OCI-LY7 (cell line): ENCODE measurements at regions of chr13 and their contacts with region 1.

Region 1: DNA sequence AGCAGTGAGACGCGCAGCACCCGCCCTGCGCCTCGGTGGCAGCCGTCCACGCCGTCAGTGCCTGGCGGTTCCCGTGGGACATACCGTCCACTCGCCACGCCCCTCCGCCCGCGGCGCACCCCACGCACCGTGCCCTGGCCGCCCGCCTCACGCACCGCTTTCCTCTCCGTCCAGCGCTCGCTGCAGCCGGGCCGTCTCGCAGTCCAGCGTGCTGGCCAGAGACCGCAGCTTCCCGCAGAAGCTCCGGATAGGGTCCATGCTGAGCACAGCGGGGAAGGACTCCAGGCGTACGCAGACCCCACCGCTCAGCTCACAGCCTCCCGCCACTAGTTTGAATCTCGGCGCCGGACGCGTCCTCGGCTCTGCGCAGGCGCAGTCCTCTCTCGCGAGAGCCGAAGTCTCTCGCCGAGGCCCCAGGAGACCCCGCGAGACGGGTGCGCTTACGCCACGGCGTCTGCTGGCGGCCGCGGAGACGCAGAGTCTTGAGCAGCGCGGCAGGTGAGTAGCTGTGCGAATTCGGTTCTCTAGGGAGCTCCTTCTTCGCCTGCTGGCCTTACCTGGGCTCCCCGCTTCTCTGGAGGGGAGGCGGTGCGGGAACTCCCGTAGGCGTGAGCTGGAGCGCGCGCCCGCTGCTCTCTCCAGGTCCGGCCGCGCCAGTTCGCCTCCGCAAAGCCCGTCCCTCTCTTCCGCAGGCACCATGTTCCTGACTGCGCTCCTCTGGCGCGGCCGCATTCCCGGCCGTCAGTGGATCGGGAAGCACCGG is at the starts of genes MRPL57 and SKA3:
- DNase-seq: peak; percentile 97
- H3K4me3 ChIP-seq: peak within 1 kb of the TSS; percentile 86
- H3K27ac ChIP-seq: peak within 1 kb of the TSS; percentile 75
- H3K4me1 ChIP-seq: peaks cover 30% of the 10 kb centered on the region
- CTCF ChIP-seq: no peak
- total RNA-seq, gene MRPL57: 38.9 and 52.9 TPM in 2 replicates
- total RNA-seq, gene SKA3: 28.5 and 34.4 TPM in 2 replicates

Region 2: GRCh38 chr13:20953245-20953931 is 223.0 kb before region 1 on chr13:
- CTCF ChIA-PET with region 1: no interaction called
- POLR2A ChIA-PET with region 1: no interaction called
- intact Hi-C with region 1: no loop called
- DNase-seq: no peak
- H3K4me3 ChIP-seq: no peak overlapping the region
- H3K27ac ChIP-seq: no peak overlapping the region
- H3K4me1 ChIP-seq: no peaks in the 10 kb centered on the region
- CTCF ChIP-seq: no peak

Region 3: DNA sequence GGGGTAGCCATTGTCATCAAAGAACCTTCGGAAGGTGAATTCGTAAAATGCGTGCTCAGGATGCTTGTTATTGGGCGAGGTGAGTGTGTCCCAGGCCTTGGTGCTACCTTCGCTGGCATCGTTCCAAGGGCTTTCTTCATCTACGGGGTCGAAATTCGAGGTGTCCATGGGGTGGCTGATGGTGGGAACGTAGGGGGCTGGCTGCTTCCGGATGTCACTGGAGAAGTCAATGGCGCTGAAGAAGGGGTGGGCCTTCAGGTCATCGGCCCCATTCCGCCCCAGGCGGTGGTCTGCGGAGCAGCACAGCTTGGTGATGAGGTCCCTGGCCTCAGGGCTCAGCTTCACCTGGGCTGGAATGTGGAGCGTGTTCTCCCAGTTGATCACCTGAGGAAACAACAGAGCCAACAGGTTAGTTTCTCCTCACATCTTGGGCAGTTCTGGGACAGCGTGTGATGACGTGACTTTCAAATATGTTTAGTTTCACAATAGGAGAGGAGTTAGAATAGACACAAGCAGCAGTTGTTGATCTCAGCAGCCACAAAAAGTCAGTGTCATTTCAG is 201.3 kb before region 1 on chr13:
- CTCF ChIA-PET with region 1: no interaction called
- POLR2A ChIA-PET with region 1: no interaction called
- intact Hi-C with region 1: no loop called
- DNase-seq: no peak
- H3K4me3 ChIP-seq: no peak overlapping the region
- H3K27ac ChIP-seq: no peak overlapping the region
- H3K4me1 ChIP-seq: no peaks in the 10 kb centered on the region
- CTCF ChIP-seq: no peak

Region 4: DNA sequence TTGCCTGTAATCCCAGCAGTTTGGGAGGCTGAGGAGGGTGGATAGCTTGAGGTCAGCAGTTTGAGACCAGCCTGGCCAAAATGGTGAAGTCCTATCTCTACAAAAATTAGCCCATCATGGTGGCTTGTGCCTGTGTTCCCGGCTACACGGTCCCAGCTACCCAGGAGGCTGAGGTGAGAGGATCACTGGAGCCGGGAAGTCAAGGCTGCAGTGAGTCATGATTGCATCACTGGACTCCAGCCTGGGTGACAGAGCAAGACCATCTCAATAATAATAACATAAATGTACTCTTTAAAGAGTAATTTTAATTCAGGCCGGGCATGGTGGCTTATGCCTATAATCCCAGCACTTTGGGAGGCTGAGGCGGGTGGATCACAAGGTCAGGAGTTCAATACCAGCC is 38.7 kb before region 1 on chr13:
- CTCF ChIA-PET with region 1: no interaction called
- POLR2A ChIA-PET with region 1: interaction called, 13 read pairs
- intact Hi-C with region 1: no loop called
- DNase-seq: no peak
- H3K4me3 ChIP-seq: no peak overlapping the region
- H3K27ac ChIP-seq: no peak overlapping the region
- H3K4me1 ChIP-seq: peaks cover 11% of the 10 kb centered on the region
- CTCF ChIP-seq: no peak

Region 5: GRCh38 chr13:21164631-21165030 is 11.8 kb before region 1 on chr13:
- CTCF ChIA-PET with region 1: no interaction called
- POLR2A ChIA-PET with region 1: interaction called, 26 read pairs
- intact Hi-C with region 1: no loop called
- DNase-seq: no peak
- H3K4me3 ChIP-seq: no peak overlapping the region
- H3K27ac ChIP-seq: no peak overlapping the region
- H3K4me1 ChIP-seq: no peaks in the 10 kb centered on the region
- CTCF ChIP-seq: no peak

Region 6: GRCh38 chr13:21476893-21477472 is 300.6 kb after region 1 on chr13:
- CTCF ChIA-PET with region 1: no interaction called
- POLR2A ChIA-PET with region 1: interaction called, 3 read pairs
- intact Hi-C with region 1: loop called (anchors 2 kb)
- DNase-seq: peak; percentile 81
- H3K4me3 ChIP-seq: peak overlapping the region; percentile 55
- H3K27ac ChIP-seq: no peak overlapping the region
- H3K4me1 ChIP-seq: no peaks in the 10 kb centered on the region
- CTCF ChIP-seq: peak; percentile 95

Region 7: DNA sequence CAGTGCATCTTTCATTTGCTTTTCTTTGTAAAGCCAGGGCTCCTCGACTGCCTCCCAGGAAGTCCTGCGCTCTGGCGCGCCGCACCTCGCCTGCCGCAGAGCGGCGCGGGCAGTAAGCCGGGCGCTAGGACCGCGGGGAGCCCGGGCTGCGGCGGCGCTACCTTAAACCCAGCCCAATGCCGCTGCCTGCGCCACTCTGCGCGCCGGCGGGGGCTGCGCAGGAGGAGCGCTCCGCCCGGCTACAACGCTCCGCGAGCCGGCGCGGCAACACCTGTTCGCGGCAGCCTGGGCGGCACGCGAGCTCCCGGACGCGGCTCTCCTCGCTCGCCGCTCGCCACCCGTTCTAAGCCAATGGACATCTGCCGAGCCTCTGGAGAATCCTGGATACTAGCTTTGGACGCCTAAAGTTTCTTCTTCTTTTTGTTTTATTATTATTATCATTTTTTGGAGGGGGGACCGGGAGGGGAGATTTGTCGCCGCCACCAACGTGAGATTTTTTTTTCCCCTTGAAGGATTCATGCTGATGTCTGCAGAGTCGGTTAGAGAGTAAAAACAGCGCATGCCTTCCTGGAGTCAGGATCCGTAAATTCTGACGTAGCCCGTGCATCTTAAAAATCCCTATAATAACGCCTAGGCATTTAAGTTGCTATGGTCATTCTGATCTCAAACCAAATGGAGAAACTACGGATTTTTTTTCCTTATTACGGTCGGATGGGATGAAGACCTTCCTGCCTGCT is 494.6 kb after region 1 on chr13 and contains the start of gene FGF9:
- CTCF ChIA-PET with region 1: no interaction called
- POLR2A ChIA-PET with region 1: no interaction called
- intact Hi-C with region 1: loop called (anchors 5 kb)
- DNase-seq: peak; percentile 92
- H3K4me3 ChIP-seq: peak within 1 kb of the TSS; percentile 90
- H3K27ac ChIP-seq: peak within 1 kb of the TSS; percentile 72
- H3K4me1 ChIP-seq: peaks cover 41% of the 10 kb centered on the region
- CTCF ChIP-seq: no peak
- total RNA-seq, gene FGF9: 2.2 and 4.7 TPM in 2 replicates